ENCODE measurements at regions of chr11 and their contacts with region 1.

Region 1: GRCh38 chr11:45332276-45332934 is 46.3 kb upstream of the SYT13 start:
- DNase-seq: peak; percentile 53
- ATAC-seq: peak; percentile 66
- H3K4me3 Mint-ChIP-seq: no peak overlapping the region
- H3K27ac Mint-ChIP-seq: no peak overlapping the region
- H3K4me1 Mint-ChIP-seq: peaks cover 7% of the 10 kb centered on the region
- H3K27me3 Mint-ChIP-seq: peaks cover 34% of the 10 kb centered on the region
- CTCF ChIP-seq: peak; percentile 93

Region 2: DNA sequence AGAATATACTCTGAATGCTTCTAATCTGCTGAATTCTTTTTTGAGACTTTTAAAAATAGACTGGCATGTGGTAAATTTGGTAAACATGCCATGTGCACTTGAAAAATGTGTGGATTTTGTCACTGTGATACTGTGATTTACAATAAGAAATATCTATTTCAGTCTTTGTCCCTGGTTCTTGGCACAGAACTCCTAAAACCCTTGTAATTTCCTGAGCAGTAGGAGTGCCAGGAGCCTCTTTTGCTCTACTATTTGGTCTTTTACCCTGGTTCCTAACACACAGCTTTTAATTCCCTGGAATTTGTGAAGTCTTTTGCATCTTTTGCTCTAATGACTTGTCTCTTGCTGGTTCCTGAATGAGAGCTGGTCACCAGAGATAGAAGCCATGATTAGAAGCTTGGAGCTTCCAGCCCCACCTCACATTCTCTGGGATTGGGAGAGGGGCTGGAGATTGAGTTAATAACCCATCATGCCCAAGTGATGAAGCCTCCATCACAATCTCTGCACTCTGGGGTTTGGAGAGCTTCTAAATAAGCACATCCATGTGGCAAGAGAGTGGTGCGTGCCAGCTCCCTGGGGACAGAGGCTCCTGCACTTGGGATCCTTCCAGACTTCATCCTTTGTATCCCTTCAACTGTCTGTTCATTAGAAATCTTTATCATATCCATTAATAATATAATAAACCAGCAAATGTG is 19.1 kb before region 1 on chr11:
- CTCF ChIA-PET with region 1: interaction called, 10 read pairs
- POLR2A ChIA-PET with region 1: no interaction called
- DNase-seq: no peak
- ATAC-seq: no peak
- H3K4me3 Mint-ChIP-seq: no peak overlapping the region
- H3K27ac Mint-ChIP-seq: no peak overlapping the region
- H3K4me1 Mint-ChIP-seq: no peaks in the 10 kb centered on the region
- H3K27me3 Mint-ChIP-seq: peaks cover 21% of the 10 kb centered on the region
- CTCF ChIP-seq: no peak